ENCODE measurements at regions of chr6 and their contacts with region 1.

Region 1: GRCh38 chr6:148177589-148178233 is 164.9 kb upstream of the SASH1 start:
- DNase-seq: peak; percentile 70
- H3K4me3 ChIP-seq: no peak overlapping the region
- H3K27ac ChIP-seq: no peak overlapping the region
- H3K4me1 ChIP-seq: no peaks in the 10 kb centered on the region
- H3K27me3 ChIP-seq: no peaks in the 10 kb centered on the region
- CTCF ChIP-seq: peak; percentile 78 to 82 (median 81)
- EP300 ChIP-seq: no peak
- POLR2A ChIP-seq: no peak

Region 2: DNA sequence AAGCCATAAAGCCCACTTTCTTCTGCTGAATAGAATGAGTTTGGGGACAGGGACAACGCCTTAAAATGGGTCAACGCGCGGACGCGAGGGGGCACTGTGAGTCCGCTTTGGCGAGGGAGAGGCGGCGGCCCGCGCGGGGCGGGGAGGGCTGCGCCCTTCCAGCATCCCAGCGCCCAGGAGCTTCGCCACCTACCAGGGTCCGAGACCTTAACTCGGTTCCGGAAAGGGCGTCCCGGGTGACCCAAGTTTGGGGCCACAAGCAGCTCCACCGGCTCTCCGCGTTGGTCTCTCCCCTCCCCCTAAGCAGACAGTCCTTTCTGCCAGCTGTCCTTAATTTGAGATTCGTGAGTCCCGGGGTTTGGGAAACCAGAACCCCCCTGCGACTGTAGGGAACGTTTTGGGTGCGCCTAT is 671.0 kb before region 1 on chr6:
- in situ Hi-C with region 1: loop called in 1 of 4 experiments (anchors 10 kb)
- intact Hi-C with region 1: no loop called
- DNase-seq: peak; percentile 82
- H3K4me3 ChIP-seq: peak overlapping the region in 3 of 4 donors; percentile 61 to 75 (median 68)
- H3K27ac ChIP-seq: no peak overlapping the region
- H3K4me1 ChIP-seq: peaks cover 6 to 35% (median 17%) of the 10 kb centered on the region in 4 donors
- H3K27me3 ChIP-seq: peaks cover 28% of the 10 kb centered on the region
- CTCF ChIP-seq: peak; percentile 77 to 83 (median 80)
- EP300 ChIP-seq: no peak
- POLR2A ChIP-seq: no peak

Region 3: DNA sequence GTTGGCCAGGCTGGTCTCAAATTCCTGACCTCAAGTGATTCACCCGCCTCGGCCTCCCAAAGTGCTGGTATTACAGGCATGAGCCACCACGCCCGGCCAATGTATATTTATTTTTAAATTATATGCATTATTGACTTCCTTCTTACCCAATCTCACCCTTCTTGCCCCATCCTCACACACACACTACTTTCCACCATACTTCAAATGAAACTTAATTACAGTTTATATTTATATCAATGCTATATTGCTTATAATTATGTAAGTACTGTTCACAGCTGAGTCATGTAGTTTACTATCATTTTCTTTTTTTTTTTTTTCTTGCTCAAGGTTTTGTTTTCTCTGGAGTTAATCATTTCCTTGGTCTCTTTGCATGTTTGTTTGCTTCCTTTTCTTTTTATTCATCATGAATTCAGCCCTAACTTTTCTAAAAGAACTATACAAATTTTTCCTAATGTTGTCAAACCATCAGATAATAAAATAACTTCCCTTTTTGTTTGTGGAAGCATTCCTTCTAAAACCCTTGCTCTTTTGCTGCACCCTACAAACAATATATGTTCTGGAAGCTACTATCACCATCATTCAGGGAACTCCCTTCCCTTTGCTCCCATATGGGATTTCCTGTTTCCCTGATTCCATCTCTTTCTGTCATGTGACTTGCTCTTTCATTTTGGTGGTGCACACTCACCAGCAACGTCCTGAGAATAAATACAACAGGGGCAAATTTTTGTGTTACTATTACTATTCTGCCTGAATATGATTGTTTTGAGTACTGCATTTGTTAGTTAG is 36.7 kb before region 1 on chr6:
- in situ Hi-C with region 1: no loop called
- intact Hi-C with region 1: no loop called
- DNase-seq: no peak
- H3K4me3 ChIP-seq: no peak overlapping the region
- H3K27ac ChIP-seq: no peak overlapping the region
- H3K4me1 ChIP-seq: no peaks in the 10 kb centered on the region
- H3K27me3 ChIP-seq: no peaks in the 10 kb centered on the region
- CTCF ChIP-seq: no peak
- EP300 ChIP-seq: no peak
- POLR2A ChIP-seq: no peak

Region 4: DNA sequence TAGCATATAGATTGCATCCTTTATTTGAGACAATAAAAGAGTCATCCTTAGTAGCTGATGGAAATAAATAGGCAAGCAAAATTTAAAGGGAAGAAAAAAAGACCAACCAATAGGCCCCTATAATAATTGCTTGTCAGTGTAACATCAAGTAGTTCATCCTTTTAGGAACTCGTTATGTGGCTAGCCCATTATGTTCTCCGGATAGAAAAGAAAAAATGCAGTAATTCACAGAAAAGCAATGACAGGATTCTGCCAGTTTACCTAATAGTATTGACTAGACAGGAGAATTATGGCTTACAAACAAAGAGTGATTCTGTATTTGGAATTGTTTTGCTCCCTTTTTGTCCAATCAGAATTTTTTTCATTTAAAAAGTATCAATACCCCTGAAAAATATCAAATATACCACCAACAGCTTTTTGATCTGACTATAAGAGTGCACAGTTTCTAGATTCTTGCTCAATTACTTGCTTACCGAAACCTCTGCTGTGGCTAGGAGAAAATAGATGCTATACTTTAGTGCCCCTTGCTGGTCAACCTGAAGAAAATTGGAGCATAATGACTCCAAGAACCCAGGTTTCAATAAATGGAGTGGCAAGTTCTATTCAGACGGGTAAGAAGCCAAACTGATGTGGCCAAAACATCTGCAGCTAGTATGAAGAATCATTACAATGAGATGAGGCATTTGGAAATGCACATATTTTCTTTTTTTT is 73.4 kb after region 1 on chr6:
- in situ Hi-C with region 1: loop called in 1 of 4 experiments (anchors 5 kb)
- intact Hi-C with region 1: loop called (anchors 5 kb)
- DNase-seq: no peak
- H3K4me3 ChIP-seq: no peak overlapping the region
- H3K27ac ChIP-seq: no peak overlapping the region
- H3K4me1 ChIP-seq: no peaks in the 10 kb centered on the region
- H3K27me3 ChIP-seq: no peaks in the 10 kb centered on the region
- CTCF ChIP-seq: peak; percentile 19 to 38 (median 28)
- EP300 ChIP-seq: no peak
- POLR2A ChIP-seq: no peak

Region 5: GRCh38 chr6:148455225-148455624 is 277.5 kb after region 1 on chr6:
- in situ Hi-C with region 1: loop called (anchors 5 to 25 kb)
- intact Hi-C with region 1: loop called (anchors 5 kb)
- DNase-seq: no peak
- H3K4me3 ChIP-seq: no peak overlapping the region
- H3K27ac ChIP-seq: no peak overlapping the region
- H3K4me1 ChIP-seq: no peaks in the 10 kb centered on the region
- H3K27me3 ChIP-seq: no peaks in the 10 kb centered on the region
- CTCF ChIP-seq: no peak
- EP300 ChIP-seq: no peak
- POLR2A ChIP-seq: no peak

Region 6: GRCh38 chr6:148464319-148465010 is 286.8 kb after region 1 on chr6:
- in situ Hi-C with region 1: loop called (anchors 5 to 25 kb)
- intact Hi-C with region 1: loop called (anchors 5 kb)
- DNase-seq: peak; percentile 69
- H3K4me3 ChIP-seq: no peak overlapping the region
- H3K27ac ChIP-seq: no peak overlapping the region
- H3K4me1 ChIP-seq: peaks cover 0 to 31% (median 6%) of the 10 kb centered on the region in 4 donors
- H3K27me3 ChIP-seq: no peaks in the 10 kb centered on the region
- CTCF ChIP-seq: peak; percentile 82 to 95 (median 92)
- EP300 ChIP-seq: no peak
- POLR2A ChIP-seq: no peak

Region 7: GRCh38 chr6:148818939-148819583 is 641.4 kb after region 1 on chr6:
- in situ Hi-C with region 1: no loop called
- intact Hi-C with region 1: no loop called
- DNase-seq: no peak
- H3K4me3 ChIP-seq: no peak overlapping the region
- H3K27ac ChIP-seq: no peak overlapping the region
- H3K4me1 ChIP-seq: no peaks in the 10 kb centered on the region
- H3K27me3 ChIP-seq: no peaks in the 10 kb centered on the region
- CTCF ChIP-seq: no peak
- EP300 ChIP-seq: no peak
- POLR2A ChIP-seq: no peak

Measured in transverse colon (tissue), 4 donors.